ENCODE measurements at regions of chr2 and their contacts with region 1.

Region 1: DNA sequence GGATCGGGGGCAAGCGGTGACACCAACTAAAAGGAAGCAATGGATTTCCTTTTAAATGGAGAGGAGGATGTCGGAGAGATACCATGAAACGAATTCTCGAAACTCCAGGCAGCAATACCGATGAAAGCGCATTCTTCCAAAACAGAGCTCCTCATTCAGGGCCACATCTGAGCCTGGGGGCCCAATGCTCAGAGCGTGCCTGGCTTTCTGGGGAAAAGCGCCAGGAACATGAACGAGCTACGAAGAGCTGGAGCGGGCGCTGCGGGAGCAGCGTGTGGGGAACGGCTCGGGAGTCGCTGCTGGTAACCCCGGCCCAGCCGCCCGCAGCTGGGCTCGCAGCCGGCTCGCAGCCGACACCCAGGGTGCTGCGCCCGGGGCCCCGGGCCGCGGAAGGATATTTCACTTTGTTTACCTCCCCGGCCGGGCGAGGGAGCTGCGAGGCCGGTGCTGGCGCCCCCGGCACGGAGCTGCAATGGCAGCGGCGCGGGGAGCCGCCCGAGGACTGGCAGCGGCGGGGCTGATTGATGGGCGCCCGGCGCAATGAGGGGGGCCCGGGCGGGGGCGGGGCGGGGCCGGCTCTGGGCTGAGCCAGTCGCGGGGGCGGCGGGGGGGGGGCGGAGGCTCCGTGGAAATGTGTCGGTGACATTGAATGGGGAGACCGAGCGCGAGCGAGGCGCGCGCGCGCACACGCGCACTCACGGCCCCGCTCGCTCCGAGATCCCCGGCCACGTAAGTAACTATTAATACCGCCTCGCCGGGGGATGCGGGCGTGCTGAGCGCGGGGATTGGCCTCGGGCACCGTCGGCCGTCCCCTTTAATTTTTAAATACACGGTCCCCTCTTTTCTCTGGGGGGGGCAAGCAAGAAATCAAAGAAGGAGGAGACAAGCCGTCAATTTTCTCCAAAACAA is at the start of gene TRIB2:
- DNase-seq: peak; percentile 79
- ATAC-seq: peak; percentile 84
- H3K4me3 Mint-ChIP-seq: peak within 1 kb of the TSS; percentile 97
- H3K27ac Mint-ChIP-seq: peak within 1 kb of the TSS; percentile 91
- H3K4me1 Mint-ChIP-seq: peaks cover 42% of the 10 kb centered on the region
- H3K27me3 Mint-ChIP-seq: no peaks in the 10 kb centered on the region
- CTCF ChIP-seq: no peak
- total RNA-seq, gene TRIB2: 17.7 and 19.3 TPM in 2 replicates

Region 2: GRCh38 chr2:11344342-11344955 is 1372.1 kb before region 1 on chr2 and contains the start of gene ROCK2:
- CTCF ChIA-PET with region 1: no interaction called
- POLR2A ChIA-PET with region 1: no interaction called
- intact Hi-C with region 1: loop called (anchors 5 kb)
- DNase-seq: peak; percentile 73
- ATAC-seq: peak; percentile 67
- H3K4me3 Mint-ChIP-seq: peak within 1 kb of the TSS; percentile 99
- H3K27ac Mint-ChIP-seq: peak within 1 kb of the TSS; percentile 86
- H3K4me1 Mint-ChIP-seq: peaks cover 29% of the 10 kb centered on the region
- H3K27me3 Mint-ChIP-seq: no peaks in the 10 kb centered on the region
- CTCF ChIP-seq: no peak
- total RNA-seq, gene ROCK2: 18.5 and 18.8 TPM in 2 replicates

Region 3: DNA sequence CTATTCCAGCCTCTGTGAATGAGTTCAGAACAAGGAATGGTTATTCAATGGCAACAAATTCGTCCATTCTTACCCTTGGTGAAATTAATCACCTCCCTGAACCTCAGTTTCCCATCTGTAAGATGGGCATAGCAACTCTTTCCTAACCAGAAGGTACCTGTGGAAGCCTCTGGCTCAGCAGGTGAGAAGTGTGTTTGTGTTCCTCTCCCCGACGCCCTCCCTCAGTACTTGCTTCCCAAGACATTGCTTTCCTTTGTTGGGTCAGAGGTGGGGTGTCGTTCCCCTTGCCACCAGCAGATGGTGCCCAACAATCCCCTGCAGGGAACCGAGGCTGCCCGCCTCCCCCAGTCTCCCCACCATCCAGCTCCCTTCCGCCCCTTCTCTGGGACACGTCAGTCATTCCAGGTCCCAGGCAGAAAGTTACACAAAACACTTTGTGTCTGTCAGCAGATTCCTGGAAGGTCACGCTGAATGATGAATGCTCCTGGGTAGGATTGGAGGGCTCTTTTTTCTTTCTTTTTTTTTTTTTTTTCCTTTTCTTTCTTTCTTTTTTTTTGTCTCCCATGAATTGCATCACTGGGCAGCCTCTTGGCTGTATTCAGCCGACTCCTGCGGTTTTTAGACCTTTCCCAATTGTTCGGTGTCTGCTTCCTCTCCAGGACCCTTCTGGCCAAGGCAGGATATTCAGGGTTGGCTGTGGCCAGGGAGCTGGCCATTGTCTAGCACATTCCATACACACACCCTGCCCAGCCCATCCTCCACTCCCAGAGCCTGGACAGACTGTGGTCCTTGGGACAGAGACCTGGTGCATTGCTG is 852.8 kb before region 1 on chr2:
- CTCF ChIA-PET with region 1: interaction called, 24 read pairs
- POLR2A ChIA-PET with region 1: interaction called, 3 read pairs
- intact Hi-C with region 1: loop called (anchors 1 kb)
- DNase-seq: peak; percentile 41
- ATAC-seq: peak; percentile 65
- H3K4me3 Mint-ChIP-seq: peak overlapping the region; percentile 47
- H3K27ac Mint-ChIP-seq: peak overlapping the region; percentile 41
- H3K4me1 Mint-ChIP-seq: peaks cover 92% of the 10 kb centered on the region
- H3K27me3 Mint-ChIP-seq: no peaks in the 10 kb centered on the region
- CTCF ChIP-seq: peak; percentile 85

Region 4: DNA sequence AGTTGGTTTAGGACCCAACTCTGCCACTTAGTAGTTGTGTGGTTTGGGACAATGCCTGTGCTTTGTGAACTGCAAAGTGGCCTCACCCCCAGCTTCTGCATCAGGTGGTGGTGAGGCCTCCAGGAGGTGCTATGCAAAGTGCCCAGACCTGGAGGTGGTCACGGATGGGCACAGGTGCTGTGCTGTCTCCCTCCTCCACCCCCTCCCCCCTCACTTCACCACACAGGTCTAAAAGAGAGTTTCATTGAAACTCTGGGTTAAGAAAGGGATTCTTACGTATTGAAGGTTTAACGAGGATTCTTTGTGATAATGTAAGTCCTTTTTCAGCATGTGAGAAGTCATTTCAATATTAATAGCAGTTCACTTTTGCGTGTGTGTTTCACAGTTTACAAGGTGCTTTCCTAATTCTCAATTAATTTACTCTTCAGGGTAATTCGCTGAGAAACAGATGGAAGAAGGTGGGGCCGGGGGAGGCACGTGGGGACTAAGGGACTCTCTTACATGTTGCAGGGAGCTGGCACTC is 600.2 kb before region 1 on chr2:
- CTCF ChIA-PET with region 1: no interaction called
- POLR2A ChIA-PET with region 1: no interaction called
- intact Hi-C with region 1: loop called (anchors 5 kb)
- DNase-seq: no peak
- ATAC-seq: peak; percentile 73
- H3K4me3 Mint-ChIP-seq: peak overlapping the region; percentile 51
- H3K27ac Mint-ChIP-seq: peak overlapping the region; percentile 78
- H3K4me1 Mint-ChIP-seq: peaks cover 63% of the 10 kb centered on the region
- H3K27me3 Mint-ChIP-seq: no peaks in the 10 kb centered on the region
- CTCF ChIP-seq: no peak

Region 5: DNA sequence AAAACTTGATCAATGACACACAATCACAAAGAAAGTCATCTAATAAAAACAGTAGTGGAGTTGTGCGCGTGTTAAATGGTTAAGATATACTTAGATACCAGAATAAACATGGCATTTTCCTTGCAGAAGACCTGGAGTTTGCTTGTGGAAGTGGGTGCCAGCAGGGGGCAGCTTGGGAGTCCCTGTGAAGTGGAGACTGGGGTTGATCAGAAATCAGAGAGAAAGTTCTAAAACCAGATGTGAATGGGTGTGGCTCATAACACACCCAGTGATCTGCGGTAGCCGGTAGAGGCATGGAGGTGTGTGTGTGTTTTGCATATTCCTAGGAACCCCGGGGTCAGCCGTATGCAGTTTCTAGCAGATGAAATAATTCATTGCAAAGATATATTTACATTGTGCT is 299.9 kb before region 1 on chr2:
- CTCF ChIA-PET with region 1: interaction called, 31 read pairs
- POLR2A ChIA-PET with region 1: no interaction called
- intact Hi-C with region 1: loop called (anchors 1 kb)
- DNase-seq: peak; percentile 22
- ATAC-seq: peak; percentile 69
- H3K4me3 Mint-ChIP-seq: no peak overlapping the region
- H3K27ac Mint-ChIP-seq: no peak overlapping the region
- H3K4me1 Mint-ChIP-seq: peaks cover 36% of the 10 kb centered on the region
- H3K27me3 Mint-ChIP-seq: no peaks in the 10 kb centered on the region
- CTCF ChIP-seq: no peak

Region 6: DNA sequence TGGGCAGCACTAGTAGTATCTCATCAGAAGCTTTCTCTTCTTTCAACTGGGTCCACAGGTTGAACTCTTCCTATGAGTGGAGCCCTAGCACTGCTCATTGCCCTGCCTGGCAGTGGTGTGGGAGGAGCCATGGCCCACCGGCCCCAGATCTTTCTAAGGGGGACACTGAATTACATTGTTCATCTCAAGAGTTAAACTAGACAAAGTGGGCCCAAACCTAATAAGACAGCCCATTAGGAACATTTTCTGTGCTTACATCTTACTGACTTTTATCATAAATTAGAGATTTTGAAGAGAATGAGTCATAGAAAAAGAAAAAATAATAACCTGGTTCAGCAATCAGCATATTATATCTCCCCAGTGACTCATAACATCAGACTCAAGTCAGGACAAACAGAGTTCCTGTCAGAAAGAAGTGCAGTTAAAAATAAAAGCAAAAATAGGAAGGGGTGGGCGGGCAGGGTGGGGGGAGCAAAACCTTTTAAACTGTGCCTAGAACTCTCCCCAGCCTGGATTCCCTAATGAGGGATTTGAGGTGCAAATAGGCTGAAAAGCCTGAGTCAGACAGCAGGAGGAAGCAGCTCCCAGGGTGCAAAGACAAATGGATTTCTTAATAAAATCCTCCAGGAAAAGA is 161.4 kb before region 1 on chr2:
- CTCF ChIA-PET with region 1: interaction called, 9 read pairs
- POLR2A ChIA-PET with region 1: interaction called, 4 read pairs
- intact Hi-C with region 1: loop called (anchors 2 kb)
- DNase-seq: no peak
- ATAC-seq: peak; percentile 67
- H3K4me3 Mint-ChIP-seq: peak overlapping the region; percentile 25
- H3K27ac Mint-ChIP-seq: peak overlapping the region; percentile 64
- H3K4me1 Mint-ChIP-seq: peaks cover 53% of the 10 kb centered on the region
- H3K27me3 Mint-ChIP-seq: no peaks in the 10 kb centered on the region
- CTCF ChIP-seq: no peak

Region 7: GRCh38 chr2:12684471-12684936 is 32.0 kb before region 1 on chr2:
- CTCF ChIA-PET with region 1: no interaction called
- POLR2A ChIA-PET with region 1: no interaction called
- intact Hi-C with region 1: no loop called
- DNase-seq: no peak
- ATAC-seq: no peak
- H3K4me3 Mint-ChIP-seq: no peak overlapping the region
- H3K27ac Mint-ChIP-seq: no peak overlapping the region
- H3K4me1 Mint-ChIP-seq: no peaks in the 10 kb centered on the region
- H3K27me3 Mint-ChIP-seq: peaks cover 16% of the 10 kb centered on the region
- CTCF ChIP-seq: no peak

Region 8: GRCh38 chr2:12778369-12778768 is 61.8 kb after region 1 on chr2:
- CTCF ChIA-PET with region 1: no interaction called
- POLR2A ChIA-PET with region 1: no interaction called
- intact Hi-C with region 1: no loop called
- DNase-seq: no peak
- ATAC-seq: no peak
- H3K4me3 Mint-ChIP-seq: no peak overlapping the region
- H3K27ac Mint-ChIP-seq: no peak overlapping the region
- H3K4me1 Mint-ChIP-seq: no peaks in the 10 kb centered on the region
- H3K27me3 Mint-ChIP-seq: peaks cover 6% of the 10 kb centered on the region
- CTCF ChIP-seq: no peak

Region 9: DNA sequence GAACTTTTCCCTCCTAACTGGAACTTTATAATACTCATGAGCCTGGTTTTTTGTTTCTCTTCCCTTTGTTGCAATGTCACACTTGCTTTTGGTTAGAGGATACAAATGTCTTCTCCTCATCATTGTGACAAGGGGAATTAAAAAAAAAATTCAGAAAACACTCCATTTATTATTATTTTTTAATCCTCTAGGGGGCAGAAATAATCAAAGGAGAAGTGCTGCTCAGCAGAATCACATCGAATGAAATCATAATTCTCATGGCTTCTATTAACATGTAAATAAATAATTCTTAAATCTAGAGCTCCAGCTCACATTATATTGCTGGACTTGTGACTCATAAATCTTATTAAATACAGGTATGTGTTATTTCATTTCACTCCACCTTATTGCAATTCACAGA is 274.0 kb after region 1 on chr2:
- CTCF ChIA-PET with region 1: no interaction called
- POLR2A ChIA-PET with region 1: no interaction called
- intact Hi-C with region 1: loop called (anchors 5 kb)
- DNase-seq: no peak
- ATAC-seq: no peak
- H3K4me3 Mint-ChIP-seq: no peak overlapping the region
- H3K27ac Mint-ChIP-seq: no peak overlapping the region
- H3K4me1 Mint-ChIP-seq: no peaks in the 10 kb centered on the region
- H3K27me3 Mint-ChIP-seq: peaks cover 12% of the 10 kb centered on the region
- CTCF ChIP-seq: no peak